ENCODE measurements at regions of chr3 and their contacts with region 1.

Region 1: DNA sequence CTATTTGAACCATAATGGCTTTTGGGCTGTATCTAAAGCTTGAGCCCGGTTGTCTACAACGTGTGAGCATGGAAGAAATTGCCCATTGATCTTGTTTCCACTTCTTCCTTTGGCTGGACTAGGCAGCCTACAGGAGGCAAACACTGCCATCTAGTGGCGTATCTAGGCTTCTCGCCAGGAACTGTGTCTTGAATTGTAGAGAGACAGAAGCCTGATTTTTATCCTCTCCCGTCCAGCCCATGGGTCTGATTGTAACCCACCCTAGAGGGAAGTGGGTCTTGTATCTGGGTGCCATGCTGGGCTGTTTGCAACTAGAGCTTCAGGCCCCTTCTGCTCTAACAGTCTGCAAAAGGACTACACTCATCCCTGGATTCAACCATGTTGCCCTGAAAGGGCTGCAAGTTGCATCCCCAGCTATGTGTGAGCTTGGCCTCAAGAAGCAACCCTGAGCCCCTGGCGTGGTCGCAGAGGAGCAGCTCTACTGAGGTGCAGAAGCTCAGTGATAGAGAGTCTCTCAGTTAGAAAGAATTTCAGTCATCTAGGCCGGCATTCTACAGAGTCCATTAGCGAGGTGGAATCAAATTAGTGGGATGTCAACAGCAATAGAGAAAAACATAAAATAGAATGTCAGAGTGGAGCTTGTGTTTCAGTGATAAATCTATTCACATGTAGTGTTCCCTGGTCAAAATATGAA is 170.2 kb upstream of the UMPS start:
- DNase-seq: peak; percentile 83 to 85
- ATAC-seq: peak; percentile 82 to 89
- H3K4me3 ChIP-seq: no peak overlapping the region
- H3K27ac ChIP-seq: peak overlapping the region; percentile 55 to 75; a peak in 5 of 6 replicates
- H3K4me1 ChIP-seq: peaks cover 29% of the 10 kb centered on the region
- CTCF ChIP-seq: peak; percentile 87
- EP300 ChIP-seq: no peak
- POLR2A ChIP-seq: no peak
- RAD21 ChIP-seq: peak; percentile 84 to 92

Region 2: GRCh38 chr3:123652346-123652984 is 907.6 kb before region 1 on chr3:
- CTCF ChIA-PET with region 1: interaction called, 11 read pairs
- POLR2A ChIA-PET with region 1: no interaction called
- DNase-seq: peak; percentile 58 to 86
- ATAC-seq: peak; percentile 94 to 98
- H3K4me3 ChIP-seq: no peak overlapping the region
- H3K27ac ChIP-seq: peak overlapping the region; percentile 69 to 85
- H3K4me1 ChIP-seq: peaks cover 15% of the 10 kb centered on the region
- CTCF ChIP-seq: peak; percentile 94
- EP300 ChIP-seq: no peak
- POLR2A ChIP-seq: no peak
- RAD21 ChIP-seq: peak; percentile 97

Region 3: DNA sequence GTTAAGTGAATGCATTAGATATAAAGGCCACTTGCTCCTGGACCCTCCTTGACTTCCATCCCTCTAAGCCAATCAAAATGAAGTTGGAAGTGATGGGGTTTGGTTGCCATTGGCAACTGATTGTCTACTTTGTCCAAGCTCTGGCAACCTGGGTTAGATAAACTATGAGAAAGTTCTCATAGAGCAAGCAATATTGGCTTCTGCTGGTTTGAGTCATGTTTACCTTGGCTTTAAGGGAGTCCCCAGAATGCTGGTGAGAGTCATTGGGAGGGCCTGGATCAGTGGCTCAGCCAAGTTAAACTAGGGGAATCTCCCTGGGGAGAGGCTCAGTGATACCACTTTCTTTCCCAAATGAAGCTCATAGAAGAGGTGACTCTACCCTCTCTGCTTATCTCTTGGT is 391.8 kb before region 1 on chr3:
- CTCF ChIA-PET with region 1: no interaction called
- POLR2A ChIA-PET with region 1: no interaction called
- DNase-seq: no peak
- ATAC-seq: no peak
- H3K4me3 ChIP-seq: no peak overlapping the region
- H3K27ac ChIP-seq: no peak overlapping the region
- H3K4me1 ChIP-seq: peaks cover 8% of the 10 kb centered on the region; the same call in 1 of the 3 replicates
- CTCF ChIP-seq: no peak
- EP300 ChIP-seq: no peak
- POLR2A ChIP-seq: no peak
- RAD21 ChIP-seq: no peak

Region 4: DNA sequence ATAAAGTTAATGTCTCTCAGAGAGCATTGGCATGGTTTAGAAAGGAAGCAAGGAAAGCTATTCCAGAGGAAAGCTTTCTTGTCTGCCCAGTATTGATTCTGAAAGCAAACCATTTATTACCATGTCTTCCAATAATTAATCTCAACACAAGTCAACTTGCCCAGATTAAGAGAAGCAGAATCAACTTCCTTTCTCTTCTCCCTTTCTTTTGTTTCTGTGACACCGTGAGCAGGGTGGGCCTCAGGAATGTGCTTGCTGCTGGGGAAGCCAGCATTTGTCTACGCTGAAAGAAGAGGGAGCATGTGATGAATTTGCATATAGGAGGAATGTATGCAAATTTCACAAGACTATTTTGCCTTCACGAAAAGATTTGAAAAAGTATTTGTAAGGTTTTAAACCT is 199.5 kb before region 1 on chr3:
- CTCF ChIA-PET with region 1: interaction called, 11 read pairs
- POLR2A ChIA-PET with region 1: no interaction called
- DNase-seq: no peak
- ATAC-seq: no peak
- H3K4me3 ChIP-seq: no peak overlapping the region
- H3K27ac ChIP-seq: no peak overlapping the region
- H3K4me1 ChIP-seq: no peaks in the 10 kb centered on the region
- CTCF ChIP-seq: no peak
- EP300 ChIP-seq: no peak
- POLR2A ChIP-seq: no peak
- RAD21 ChIP-seq: no peak

Region 5: GRCh38 chr3:124517306-124517705 is 42.7 kb before region 1 on chr3:
- CTCF ChIA-PET with region 1: interaction called, 15 read pairs
- POLR2A ChIA-PET with region 1: no interaction called
- DNase-seq: no peak
- ATAC-seq: no peak
- H3K4me3 ChIP-seq: no peak overlapping the region
- H3K27ac ChIP-seq: no peak overlapping the region
- H3K4me1 ChIP-seq: peaks cover 30% of the 10 kb centered on the region
- CTCF ChIP-seq: no peak
- EP300 ChIP-seq: no peak
- POLR2A ChIP-seq: no peak
- RAD21 ChIP-seq: no peak

Region 6: GRCh38 chr3:124609402-124609801 is 49.4 kb after region 1 on chr3:
- CTCF ChIA-PET with region 1: interaction called, 11 read pairs
- POLR2A ChIA-PET with region 1: no interaction called
- DNase-seq: no peak
- ATAC-seq: no peak
- H3K4me3 ChIP-seq: no peak overlapping the region
- H3K27ac ChIP-seq: no peak overlapping the region
- H3K4me1 ChIP-seq: peaks cover 10% of the 10 kb centered on the region; the same call in 2 of the 3 replicates
- CTCF ChIP-seq: no peak
- EP300 ChIP-seq: no peak
- POLR2A ChIP-seq: no peak
- RAD21 ChIP-seq: no peak

Region 7: DNA sequence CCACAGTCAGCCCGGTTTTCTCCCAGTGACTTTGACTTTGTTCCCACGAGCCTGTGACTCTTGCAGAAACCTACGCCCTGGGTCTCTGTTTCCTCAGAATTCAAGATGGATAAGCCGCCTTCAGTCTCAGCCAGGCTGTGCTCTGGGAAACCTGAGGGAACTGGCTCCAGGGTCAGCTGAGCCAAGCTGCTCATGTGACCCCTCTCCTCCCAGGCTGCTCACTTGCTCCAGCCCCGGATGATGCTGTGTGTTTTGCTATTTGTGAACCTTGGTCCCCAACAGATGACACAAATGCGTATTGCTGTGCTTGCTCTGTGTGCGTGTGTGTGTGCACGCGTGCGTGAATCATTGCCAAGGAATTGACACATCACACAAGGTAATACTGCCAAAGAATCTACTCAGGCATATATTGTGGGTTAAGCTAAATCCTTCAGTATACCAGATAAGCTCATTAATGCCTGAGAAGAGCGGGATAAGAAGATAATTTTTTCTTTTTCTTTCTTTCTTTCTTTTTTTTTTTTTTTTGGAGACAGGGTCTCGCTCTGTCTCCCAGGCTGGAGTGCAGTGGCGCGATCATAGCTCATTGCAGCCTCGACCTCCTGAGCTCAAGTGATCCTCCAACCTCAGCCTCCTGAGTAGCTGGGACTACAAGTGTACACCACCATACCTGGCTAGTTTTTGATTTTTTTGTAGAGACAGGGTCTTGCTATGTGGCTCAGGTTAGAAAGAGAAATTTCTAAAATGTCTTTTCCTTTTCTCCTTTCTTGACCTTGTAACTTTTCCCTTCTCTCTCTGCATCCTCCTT is 141.1 kb after region 1 on chr3:
- CTCF ChIA-PET with region 1: interaction called, 31 read pairs
- POLR2A ChIA-PET with region 1: no interaction called
- DNase-seq: no peak
- ATAC-seq: peak; percentile 43 to 56; a peak in 3 of 6 replicates
- H3K4me3 ChIP-seq: no peak overlapping the region
- H3K27ac ChIP-seq: no peak overlapping the region
- H3K4me1 ChIP-seq: peaks cover 8% of the 10 kb centered on the region; the same call in 2 of the 3 replicates
- CTCF ChIP-seq: no peak
- EP300 ChIP-seq: no peak
- POLR2A ChIP-seq: no peak
- RAD21 ChIP-seq: no peak